Spleen (tissue), 13 donors: ENCODE measurements at regions of chr3 and their contacts with region 1.

Region 1: DNA sequence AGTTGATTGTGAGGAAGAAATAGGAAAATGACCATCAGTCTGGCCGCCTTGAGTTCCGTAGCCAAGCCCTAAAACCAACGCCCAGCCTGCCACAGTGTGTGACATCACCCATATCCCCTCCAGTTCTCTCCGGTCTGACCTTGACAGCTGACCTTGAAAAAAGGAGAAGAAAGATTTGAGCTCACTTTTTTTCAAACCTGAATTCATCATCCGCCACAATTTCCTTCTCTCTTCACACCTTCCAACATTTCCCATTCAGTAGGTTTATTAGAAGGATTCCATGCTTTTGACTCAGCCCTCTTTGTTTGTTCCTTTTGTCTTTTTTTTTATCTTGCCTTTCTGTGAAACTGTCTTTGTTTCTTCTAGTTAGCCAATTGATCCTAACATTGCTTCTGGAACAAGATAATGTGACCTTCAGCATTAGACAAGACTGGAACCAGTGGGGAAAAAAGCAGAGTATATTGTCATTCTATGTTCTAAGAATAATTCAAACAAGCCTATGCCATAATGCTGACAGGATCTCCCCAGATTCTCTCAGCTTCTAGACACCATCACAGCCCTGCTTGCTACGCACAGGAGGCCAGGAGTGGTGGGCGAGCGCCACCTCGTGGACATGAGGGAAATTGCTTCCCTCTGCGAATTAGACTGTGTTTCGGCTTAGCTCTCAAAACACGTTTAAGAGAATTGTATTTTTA is 283.1 kb downstream of the FGF12 start:
- DNase-seq: peak; percentile 88
- H3K4me3 ChIP-seq: no peak overlapping the region
- H3K27ac ChIP-seq: peak overlapping the region in 6 of 8 donors; percentile 29 to 49 (median 44)
- H3K4me1 ChIP-seq: peaks cover 0 to 11% (median 0%) of the 10 kb centered on the region in 6 donors
- H3K27me3 ChIP-seq: peaks cover 0 to 15% (median 0%) of the 10 kb centered on the region in 7 donors
- CTCF ChIP-seq: peak; percentile 74 to 97 (median 84)
- POLR2A ChIP-seq: no peak

Region 2: GRCh38 chr3:191412759-191413158 is 1031.5 kb before region 1 on chr3:
- intact Hi-C with region 1: loop called (anchors 10 kb)
- DNase-seq: no peak
- H3K4me3 ChIP-seq: no peak overlapping the region
- H3K27ac ChIP-seq: no peak overlapping the region
- H3K4me1 ChIP-seq: no peaks in the 10 kb centered on the region
- H3K27me3 ChIP-seq: no peaks in the 10 kb centered on the region
- CTCF ChIP-seq: no peak
- POLR2A ChIP-seq: no peak

Region 3: GRCh38 chr3:192409357-192409824 is 34.9 kb before region 1 on chr3:
- intact Hi-C with region 1: no loop called
- DNase-seq: peak; percentile 86
- H3K4me3 ChIP-seq: peak overlapping the region; percentile 20 to 71 (median 41)
- H3K27ac ChIP-seq: peak overlapping the region; percentile 72 to 93 (median 89)
- H3K4me1 ChIP-seq: peaks cover 0 to 35% (median 17%) of the 10 kb centered on the region in 6 donors
- H3K27me3 ChIP-seq: peaks cover 0 to 59% (median 25%) of the 10 kb centered on the region in 7 donors
- CTCF ChIP-seq: no peak
- POLR2A ChIP-seq: peak in 1 of 3 donors; percentile 30